ENCODE measurements at regions of chr11 and their contacts with region 1.

Region 1: DNA sequence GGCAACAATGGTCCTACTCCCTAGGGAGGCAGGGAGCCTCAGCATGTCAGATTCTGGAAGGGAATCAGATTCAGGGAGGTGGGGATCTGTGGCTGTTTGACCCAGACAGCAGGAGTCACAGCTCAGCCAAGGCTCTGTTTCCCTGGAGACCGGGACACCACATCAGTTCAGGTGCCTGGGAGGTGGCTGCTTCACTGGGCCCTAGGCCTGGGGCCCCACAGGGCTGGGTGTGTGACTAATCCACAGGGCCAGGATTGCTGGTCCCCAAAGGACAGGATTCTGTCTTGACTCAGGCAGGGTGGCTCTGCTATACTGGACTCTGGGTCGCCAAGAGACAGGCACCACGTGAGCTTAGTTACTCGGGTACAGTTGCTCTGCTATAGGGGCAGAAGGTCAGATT is 3.5 kb upstream of the OR5AN1 start:
- DNase-seq: no peak
- ATAC-seq: no peak
- H3K4me3 ChIP-seq: no peak overlapping the region
- H3K4me3 Mint-ChIP-seq: no peak overlapping the region
- H3K27ac ChIP-seq: no peak overlapping the region
- H3K27ac Mint-ChIP-seq: no peak overlapping the region
- H3K4me1 ChIP-seq: no peaks in the 10 kb centered on the region
- H3K4me1 Mint-ChIP-seq: no peaks in the 10 kb centered on the region
- H3K27me3 ChIP-seq: peaks cover 0 to 18% of the 10 kb centered on the region in 2 experiments
- H3K27me3 Mint-ChIP-seq: peaks cover 22 to 39% of the 10 kb centered on the region in 2 donors

Region 2: GRCh38 chr11:59335001-59335400 is 20.2 kb before region 1 on chr11:
- CTCF ChIA-PET with region 1: no interaction called
- POLR2A ChIA-PET with region 1: no interaction called
- DNase-seq: no peak
- ATAC-seq: no peak
- H3K4me3 ChIP-seq: no peak overlapping the region
- H3K4me3 Mint-ChIP-seq: no peak overlapping the region
- H3K27ac ChIP-seq: no peak overlapping the region
- H3K27ac Mint-ChIP-seq: no peak overlapping the region
- H3K4me1 ChIP-seq: no peaks in the 10 kb centered on the region
- H3K4me1 Mint-ChIP-seq: no peaks in the 10 kb centered on the region
- H3K27me3 ChIP-seq: peaks cover 0 to 6% of the 10 kb centered on the region in 2 experiments
- H3K27me3 Mint-ChIP-seq: peaks cover 6 to 18% of the 10 kb centered on the region in 2 donors

Region 3: GRCh38 chr11:59448484-59448883 is 93.3 kb after region 1 on chr11:
- CTCF ChIA-PET with region 1: no interaction called
- POLR2A ChIA-PET with region 1: no interaction called
- DNase-seq: no peak
- ATAC-seq: no peak
- H3K4me3 ChIP-seq: no peak overlapping the region
- H3K4me3 Mint-ChIP-seq: no peak overlapping the region
- H3K27ac ChIP-seq: no peak overlapping the region
- H3K27ac Mint-ChIP-seq: no peak overlapping the region
- H3K4me1 ChIP-seq: no peaks in the 10 kb centered on the region
- H3K4me1 Mint-ChIP-seq: no peaks in the 10 kb centered on the region
- H3K27me3 ChIP-seq: no peaks in the 10 kb centered on the region
- H3K27me3 Mint-ChIP-seq: peaks cover 4% of the 10 kb centered on the region in 2 donors

Region 4: DNA sequence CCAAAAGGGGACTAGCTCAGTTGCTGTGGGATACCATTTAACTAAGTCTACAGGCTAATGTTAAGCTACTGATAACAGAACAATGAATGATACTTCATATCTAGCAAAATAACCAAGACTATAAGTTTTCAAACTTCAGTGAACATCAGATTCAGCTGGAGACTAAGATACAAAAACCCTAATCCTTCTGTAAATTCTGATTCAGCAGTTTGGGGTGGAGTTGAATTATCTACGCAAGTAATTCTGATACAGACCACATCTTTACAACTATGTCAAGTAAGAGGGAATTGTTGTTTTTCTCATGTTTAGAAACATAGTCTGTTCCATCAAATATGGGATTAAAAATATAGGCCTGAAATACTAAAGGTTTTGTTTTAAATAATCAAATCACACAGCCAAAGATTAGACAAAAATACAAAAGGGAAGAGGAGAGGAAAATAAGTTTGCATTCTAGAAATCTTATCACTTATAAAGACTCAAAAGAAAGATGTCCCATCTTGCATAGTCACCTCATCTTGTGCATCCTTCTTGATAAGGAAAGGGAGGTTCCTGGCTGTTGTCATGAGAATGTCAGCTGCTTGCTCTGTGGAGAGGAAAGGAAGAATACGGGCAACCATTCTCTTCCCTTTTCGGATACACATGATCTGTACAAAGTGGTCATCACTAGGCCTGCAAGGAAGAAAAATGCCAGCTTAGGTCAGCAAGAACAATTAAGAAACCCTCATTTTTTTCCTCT is 292.2 kb after region 1 on chr11:
- CTCF ChIA-PET with region 1: no interaction called
- POLR2A ChIA-PET with region 1: interaction called in 1 of 2 experiments, 11 read pairs
- DNase-seq: no peak
- ATAC-seq: no peak
- H3K4me3 ChIP-seq: no peak overlapping the region
- H3K4me3 Mint-ChIP-seq: no peak overlapping the region
- H3K27ac ChIP-seq: no peak overlapping the region
- H3K27ac Mint-ChIP-seq: no peak overlapping the region
- H3K4me1 ChIP-seq: no peaks in the 10 kb centered on the region
- H3K4me1 Mint-ChIP-seq: no peaks in the 10 kb centered on the region
- H3K27me3 ChIP-seq: no peaks in the 10 kb centered on the region
- H3K27me3 Mint-ChIP-seq: no peaks in the 10 kb centered on the region

Measured in T-cell (primary cell).